SK-N-SH (cell line): ENCODE measurements at regions of chr4 and their contacts with region 1.

Region 1: GRCh38 chr4:7987148-7987989 is 47.7 kb upstream of the AFAP1 start:
- DNase-seq: peak; percentile 86
- H3K4me3 ChIP-seq: no peak overlapping the region; a peak in 1 of 4 replicates
- H3K27ac ChIP-seq: no peak overlapping the region
- H3K4me1 ChIP-seq: no peaks in the 10 kb centered on the region; a peak in 1 of 4 replicates
- H3K27me3 ChIP-seq: no peaks in the 10 kb centered on the region
- CTCF ChIP-seq: peak; percentile 88
- EP300 ChIP-seq: no peak
- RAD21 ChIP-seq: peak; percentile 96

Region 2: DNA sequence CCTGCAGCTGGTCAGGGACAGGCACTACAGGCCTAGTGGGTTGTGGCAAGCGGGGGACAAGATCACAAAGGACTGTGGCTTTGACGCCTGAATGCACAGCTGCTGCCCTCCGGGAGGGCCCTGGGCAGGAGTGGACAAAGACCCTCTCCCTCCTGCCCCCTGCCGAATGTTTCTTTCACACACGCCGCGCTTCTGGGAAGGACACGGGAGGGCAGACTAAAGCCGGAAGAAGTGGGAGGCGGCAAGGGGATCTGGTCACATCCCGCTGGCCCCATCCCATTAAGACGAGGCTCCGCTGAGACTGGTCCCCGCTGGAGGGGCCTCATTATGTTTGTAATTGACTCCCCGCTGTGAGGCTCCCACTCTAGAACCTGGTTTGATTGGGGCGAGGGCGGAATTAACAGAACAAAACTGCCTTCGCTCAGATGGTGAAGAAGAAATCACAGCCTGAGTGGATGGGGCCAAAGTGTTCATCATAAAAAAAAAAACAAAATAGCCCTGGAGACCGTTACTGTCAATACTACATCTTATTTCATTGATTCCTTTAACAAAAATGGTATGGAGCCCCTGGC is 514.8 kb before region 1 on chr4:
- CTCF ChIA-PET with region 1: no interaction called
- POLR2A ChIA-PET with region 1: no interaction called
- DNase-seq: no peak
- H3K4me3 ChIP-seq: no peak overlapping the region
- H3K27ac ChIP-seq: no peak overlapping the region
- H3K4me1 ChIP-seq: no peaks in the 10 kb centered on the region
- H3K27me3 ChIP-seq: no peaks in the 10 kb centered on the region
- CTCF ChIP-seq: no peak
- EP300 ChIP-seq: no peak
- RAD21 ChIP-seq: no peak

Region 3: GRCh38 chr4:7770224-7771050 is 216.9 kb before region 1 on chr4:
- CTCF ChIA-PET with region 1: interaction called, 31 read pairs
- POLR2A ChIA-PET with region 1: no interaction called
- DNase-seq: peak; percentile 73
- H3K4me3 ChIP-seq: no peak overlapping the region
- H3K27ac ChIP-seq: peak overlapping the region in 1 of 2 experiments; percentile 25; a peak in 1 of 4 replicates
- H3K4me1 ChIP-seq: peaks cover 0 to 27% of the 10 kb centered on the region in 2 experiments; a peak in 1 of 4 replicates
- H3K27me3 ChIP-seq: no peaks in the 10 kb centered on the region
- CTCF ChIP-seq: peak; percentile 63
- EP300 ChIP-seq: no peak
- RAD21 ChIP-seq: peak; percentile 69

Region 4: GRCh38 chr4:7910952-7911578 is 76.3 kb before region 1 on chr4:
- CTCF ChIA-PET with region 1: no interaction called
- POLR2A ChIA-PET with region 1: no interaction called
- DNase-seq: peak; percentile 67
- H3K4me3 ChIP-seq: 0 out of 4 replicates have a peak overlapping the region, but pooled peaks of 1 of the 2 experiments have one; percentile 7
- H3K27ac ChIP-seq: peak overlapping the region; percentile 96 to 97
- H3K4me1 ChIP-seq: peaks cover 58 to 69% of the 10 kb centered on the region in 2 experiments
- H3K27me3 ChIP-seq: no peaks in the 10 kb centered on the region
- CTCF ChIP-seq: no peak
- EP300 ChIP-seq: no peak
- RAD21 ChIP-seq: no peak

Region 5: GRCh38 chr4:7939377-7940108 is 47.8 kb before region 1 on chr4 and contains the start of gene AFAP1:
- CTCF ChIA-PET with region 1: interaction called, 16 read pairs
- POLR2A ChIA-PET with region 1: no interaction called
- DNase-seq: peak; percentile 99
- H3K4me3 ChIP-seq: peak within 1 kb of the TSS; percentile 83 to 95
- H3K27ac ChIP-seq: peak within 1 kb of the TSS; percentile 82 to 85
- H3K4me1 ChIP-seq: peaks cover 15% of the 10 kb centered on the region in 2 experiments; a peak in 2 of 4 replicates
- H3K27me3 ChIP-seq: no peaks in the 10 kb centered on the region
- CTCF ChIP-seq: no peak
- EP300 ChIP-seq: no peak
- RAD21 ChIP-seq: no peak
- polyA plus RNA-seq, gene AFAP1: 40.6 and 67.9 TPM in 2 replicates

Region 6: DNA sequence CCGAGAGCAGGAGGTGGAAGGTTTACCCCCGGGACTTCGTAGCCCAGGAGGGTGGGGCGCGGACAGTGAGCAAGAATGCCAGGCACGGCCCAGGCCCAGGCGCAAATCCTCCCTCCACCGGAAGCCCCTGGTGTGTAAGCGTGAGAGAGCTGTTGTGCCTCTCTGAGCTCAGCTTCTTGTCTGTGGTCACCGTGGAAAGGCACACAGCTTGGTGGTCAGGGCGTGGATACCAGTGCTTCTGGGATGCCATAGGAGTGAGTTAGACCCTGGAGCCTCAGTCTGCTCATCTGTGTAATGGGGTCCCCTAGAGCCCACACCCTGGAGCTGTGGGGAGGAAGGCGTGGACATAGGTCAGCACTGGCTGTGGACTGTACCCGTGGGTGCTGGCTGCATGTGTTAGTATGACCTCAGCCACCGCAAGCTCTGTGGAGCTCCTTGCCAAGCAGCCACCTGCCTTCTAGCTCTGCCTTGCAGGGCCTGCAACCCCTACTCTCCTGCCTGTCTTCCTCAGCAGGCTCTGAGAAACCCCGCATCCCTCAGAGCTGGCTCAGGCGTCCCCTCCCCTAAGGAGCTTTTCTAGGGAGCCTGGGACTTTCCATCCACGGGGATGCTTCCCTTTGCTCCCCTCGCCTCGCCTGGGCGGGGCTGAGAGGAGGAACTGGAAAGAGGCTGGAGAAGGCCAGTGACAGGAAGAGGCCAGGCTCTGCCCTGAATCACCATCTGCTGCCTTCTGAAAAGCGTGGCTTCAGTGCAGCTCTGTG is 19.7 kb before region 1 on chr4:
- CTCF ChIA-PET with region 1: interaction called, 19 read pairs
- POLR2A ChIA-PET with region 1: no interaction called
- DNase-seq: no peak
- H3K4me3 ChIP-seq: no peak overlapping the region
- H3K27ac ChIP-seq: no peak overlapping the region
- H3K4me1 ChIP-seq: peaks cover 27 to 37% of the 10 kb centered on the region in 2 experiments; a peak in 3 of 4 replicates
- H3K27me3 ChIP-seq: no peaks in the 10 kb centered on the region
- CTCF ChIP-seq: no peak
- EP300 ChIP-seq: no peak
- RAD21 ChIP-seq: no peak